CD4-positive, alpha-beta T cell (primary cell): ENCODE measurements at regions of chr4 and their contacts with region 1.

Region 1: DNA sequence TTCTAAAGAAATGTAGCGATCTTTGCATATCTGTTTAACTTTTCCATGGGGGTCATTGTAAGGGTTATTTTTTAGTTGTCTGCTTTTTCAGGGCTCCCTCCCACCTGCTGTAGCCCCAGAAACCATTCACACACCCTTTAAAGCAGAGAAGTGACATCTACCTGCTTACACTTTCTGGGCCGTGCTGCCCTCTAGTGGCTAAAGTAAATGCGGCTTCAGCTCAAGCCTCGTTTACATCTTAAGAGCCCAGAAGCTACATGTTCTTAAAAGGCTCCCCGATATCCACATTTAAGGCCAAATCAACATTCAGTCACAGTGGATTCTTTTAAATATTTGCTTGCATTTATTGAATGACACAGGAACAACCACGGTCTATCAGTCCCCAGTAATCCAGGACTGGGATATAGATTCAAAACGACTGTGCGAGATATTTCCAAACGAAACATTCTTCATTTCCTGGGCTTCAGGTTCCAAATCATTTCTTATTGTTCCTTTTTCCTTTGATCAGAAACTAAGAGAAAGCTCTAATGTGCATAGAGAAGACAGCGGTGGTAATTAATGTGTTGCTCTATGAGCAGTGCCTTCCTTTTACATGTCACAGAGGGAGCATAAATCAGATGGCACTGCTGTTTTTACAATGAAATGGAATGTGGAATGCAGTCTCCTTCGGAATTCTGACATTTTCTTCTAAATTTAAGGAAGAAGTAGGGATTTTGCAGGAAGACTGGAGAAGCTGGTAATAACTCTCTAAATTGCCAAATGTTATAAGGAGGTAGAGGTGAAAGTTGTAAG is 119.9 kb downstream of the RASGEF1B start:
- DNase-seq: peak; percentile 42 to 76 (median 53)
- ATAC-seq: peak; percentile 48
- H3K4me3 ChIP-seq: no peak overlapping the region
- H3K4me3 Mint-ChIP-seq: no peak overlapping the region
- H3K27ac ChIP-seq: no peak overlapping the region
- H3K27ac Mint-ChIP-seq: no peak overlapping the region
- H3K4me1 ChIP-seq: no peaks in the 10 kb centered on the region
- H3K4me1 Mint-ChIP-seq: no peaks in the 10 kb centered on the region
- H3K27me3 ChIP-seq: peaks cover 0 to under 1% of the 10 kb centered on the region in 2 experiments
- H3K27me3 Mint-ChIP-seq: peaks cover 32% of the 10 kb centered on the region
- CTCF ChIP-seq: peak; percentile 93

Region 2: DNA sequence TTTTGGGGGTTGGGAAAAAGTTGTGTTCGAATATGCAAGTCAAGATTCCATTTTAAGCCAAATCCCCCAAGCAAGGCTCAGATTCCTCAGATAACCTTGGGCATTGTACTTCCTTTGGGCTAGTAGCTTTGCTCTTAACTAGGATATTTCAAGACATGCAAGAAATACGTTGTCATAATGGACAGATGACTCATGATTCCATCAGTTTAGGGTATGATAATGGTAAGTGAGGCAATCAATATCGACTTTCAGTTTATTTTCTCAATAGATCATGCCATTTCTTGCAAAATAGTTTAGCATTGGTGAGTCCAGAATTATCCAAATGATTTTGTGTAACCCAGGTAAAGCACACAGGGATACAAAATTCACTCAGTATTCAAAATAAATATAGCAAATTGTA is 991.0 kb before region 1 on chr4:
- CTCF ChIA-PET with region 1: interaction called, 6 read pairs
- POLR2A ChIA-PET with region 1: no interaction called
- intact Hi-C with region 1: loop called (anchors 1 kb)
- DNase-seq: no peak
- ATAC-seq: no peak
- H3K4me3 ChIP-seq: no peak overlapping the region
- H3K4me3 Mint-ChIP-seq: no peak overlapping the region
- H3K27ac ChIP-seq: no peak overlapping the region
- H3K27ac Mint-ChIP-seq: no peak overlapping the region
- H3K4me1 ChIP-seq: peaks cover 2% of the 10 kb centered on the region
- H3K4me1 Mint-ChIP-seq: peaks cover 1% of the 10 kb centered on the region
- H3K27me3 ChIP-seq: peaks cover 7% of the 10 kb centered on the region in 2 experiments
- H3K27me3 Mint-ChIP-seq: peaks cover 38% of the 10 kb centered on the region
- CTCF ChIP-seq: no peak

Region 3: DNA sequence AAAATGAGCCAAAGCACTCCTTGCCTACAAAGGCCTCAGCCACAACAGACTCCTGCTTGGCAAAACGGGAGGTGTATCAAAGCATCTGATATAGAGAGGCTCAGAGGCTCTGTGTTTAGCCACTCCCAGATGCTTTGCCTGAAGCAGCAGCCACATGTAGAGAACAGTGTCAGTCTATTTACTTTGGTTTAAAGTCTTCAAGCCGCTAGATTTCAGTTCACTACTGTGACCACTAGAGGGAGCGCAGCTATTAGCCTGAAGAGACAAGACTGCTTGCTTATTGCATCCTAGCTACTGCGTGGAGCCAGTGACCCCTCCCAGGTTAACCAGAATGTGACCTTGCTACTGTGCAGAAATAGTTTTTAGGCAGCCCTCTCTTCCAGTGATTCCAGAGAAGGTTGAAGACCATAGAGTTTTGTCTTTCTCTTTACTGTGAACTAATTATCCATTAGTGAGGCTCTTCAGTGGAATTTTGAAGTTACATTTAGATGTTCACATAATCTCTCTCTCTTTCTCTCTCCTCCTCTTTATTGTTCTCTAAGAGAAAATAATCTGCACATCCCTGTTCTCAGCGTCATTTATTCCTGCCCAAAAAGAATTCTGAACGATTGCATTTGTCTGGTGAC is 282.0 kb before region 1 on chr4:
- CTCF ChIA-PET with region 1: interaction called, 6 read pairs
- POLR2A ChIA-PET with region 1: no interaction called
- intact Hi-C with region 1: loop called (anchors 2 kb)
- DNase-seq: peak; percentile 16 to 81 (median 40)
- ATAC-seq: peak; percentile 96
- H3K4me3 ChIP-seq: no peak overlapping the region
- H3K4me3 Mint-ChIP-seq: no peak overlapping the region
- H3K27ac ChIP-seq: no peak overlapping the region
- H3K27ac Mint-ChIP-seq: no peak overlapping the region
- H3K4me1 ChIP-seq: no peaks in the 10 kb centered on the region
- H3K4me1 Mint-ChIP-seq: no peaks in the 10 kb centered on the region
- H3K27me3 ChIP-seq: peaks cover 0 to 7% of the 10 kb centered on the region in 2 experiments
- H3K27me3 Mint-ChIP-seq: peaks cover 30% of the 10 kb centered on the region
- CTCF ChIP-seq: peak; percentile 96